AG04450 (cell line): ENCODE measurements at regions of chr12 and their contacts with region 1.

Region 1: DNA sequence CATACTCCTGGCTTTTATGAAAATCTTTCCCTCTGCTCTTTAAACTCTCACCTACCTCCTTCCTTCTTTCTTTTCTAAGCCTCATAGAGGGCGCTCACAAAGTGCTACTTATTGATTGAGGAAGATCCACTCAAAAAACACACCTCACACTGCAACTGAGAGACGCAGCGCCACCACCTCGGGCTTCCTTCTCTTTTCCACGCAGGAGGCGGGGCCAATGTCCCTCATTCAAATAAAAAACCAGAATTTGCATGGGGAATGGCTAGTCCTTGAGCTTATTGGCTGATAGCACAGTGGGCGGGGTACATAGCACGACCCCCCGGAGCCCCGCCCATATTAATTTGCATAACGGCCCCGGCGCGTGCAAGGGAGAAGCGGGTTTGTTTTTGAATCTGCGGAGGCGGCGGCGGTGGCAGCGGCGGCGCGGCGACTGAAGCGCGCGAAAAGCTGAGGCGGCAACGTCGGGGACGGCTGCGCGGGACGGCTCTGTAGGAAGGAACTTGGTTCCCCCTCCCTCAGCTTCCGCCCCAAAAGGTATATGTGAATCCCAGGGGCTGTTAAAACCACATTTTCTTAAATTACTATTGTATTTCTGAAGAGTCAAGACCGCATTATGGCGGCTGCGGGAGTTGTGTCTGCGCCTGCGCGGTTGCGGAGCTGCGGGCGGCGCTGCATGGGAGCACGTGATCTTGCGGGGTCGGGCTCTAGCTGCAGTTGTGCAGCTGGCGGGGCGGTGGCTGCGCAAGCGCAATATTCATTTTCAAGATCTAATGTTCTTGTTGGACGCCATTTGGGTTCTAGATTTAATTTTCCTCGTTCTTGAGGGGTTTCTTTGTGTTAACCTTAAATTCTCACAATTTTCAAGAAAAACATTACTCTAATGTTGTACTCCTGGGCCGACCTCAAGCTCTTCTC is at the start of gene ATF7IP:
- DNase-seq: peak; percentile 94
- H3K4me3 ChIP-seq: peak within 1 kb of the TSS; percentile 77
- H3K27ac ChIP-seq: peak within 1 kb of the TSS; percentile 90
- H3K27me3 ChIP-seq: no peaks in the 10 kb centered on the region
- CTCF ChIP-seq: peak; percentile 30; the same call in 1 of the 2 replicates
- polyA plus RNA-seq, gene ATF7IP: 24.8 and 26.6 TPM in 2 replicates

Region 2: DNA sequence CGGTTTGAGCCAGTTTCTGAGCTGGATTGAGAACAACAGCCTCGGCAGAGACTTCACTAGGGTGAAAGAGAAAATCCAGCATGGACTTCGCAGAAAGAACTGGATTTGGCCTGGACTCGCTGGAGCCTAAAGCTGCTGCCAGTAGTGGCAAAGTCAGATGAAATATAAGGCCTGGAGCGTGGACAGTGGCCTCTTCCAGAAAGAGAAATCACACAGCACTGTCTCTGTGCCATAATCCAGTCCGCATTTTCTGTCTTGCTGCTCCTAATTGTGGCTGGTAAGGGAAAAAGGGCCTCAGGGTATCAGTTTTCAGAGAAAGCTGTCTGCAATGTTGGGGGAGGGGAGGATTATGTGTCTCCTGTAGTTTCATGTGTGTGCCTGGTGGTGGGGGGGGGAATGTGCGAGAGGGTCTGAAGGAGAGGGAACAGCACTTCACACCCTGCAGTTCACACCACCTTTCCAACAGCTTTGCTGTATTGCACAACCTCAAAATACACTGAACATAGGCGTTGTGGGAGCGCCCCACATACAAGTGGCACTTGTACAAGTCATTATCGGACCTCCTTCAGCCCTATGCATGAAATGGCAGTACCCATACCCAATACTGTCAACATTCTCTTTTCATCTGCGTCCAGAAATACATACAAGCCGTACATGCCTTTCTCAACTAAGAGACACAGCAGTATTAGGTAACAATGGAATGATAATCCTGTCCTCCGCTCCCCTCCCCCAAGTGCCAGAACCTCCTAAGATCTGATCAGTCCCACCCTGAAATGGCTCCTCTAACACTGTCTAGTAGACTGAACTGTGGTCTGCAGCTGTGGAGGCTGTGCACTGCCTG is 107.6 kb before region 1 on chr12:
- CTCF ChIA-PET with region 1: interaction called, 18 read pairs
- POLR2A ChIA-PET with region 1: interaction called, 28 read pairs
- DNase-seq: peak; percentile 99
- H3K4me3 ChIP-seq: 0 out of 2 replicates have a peak overlapping the region, but pooled peaks have one; percentile 32
- H3K27ac ChIP-seq: peak overlapping the region; percentile 74
- H3K27me3 ChIP-seq: no peaks in the 10 kb centered on the region
- CTCF ChIP-seq: no peak

Region 3: GRCh38 chr12:14384783-14385638 is 19.5 kb after region 1 on chr12:
- CTCF ChIA-PET with region 1: interaction called, 4 read pairs
- POLR2A ChIA-PET with region 1: interaction called, 14 read pairs
- DNase-seq: peak; percentile 87
- H3K4me3 ChIP-seq: peak overlapping the region; percentile 54
- H3K27ac ChIP-seq: peak overlapping the region; percentile 32
- H3K27me3 ChIP-seq: no peaks in the 10 kb centered on the region
- CTCF ChIP-seq: no peak

Region 4: GRCh38 chr12:14417715-14418114 is 52.2 kb after region 1 on chr12:
- CTCF ChIA-PET with region 1: interaction called, 10 read pairs
- POLR2A ChIA-PET with region 1: interaction called, 9 read pairs
- DNase-seq: peak; percentile 76
- H3K4me3 ChIP-seq: no peak overlapping the region
- H3K27ac ChIP-seq: no peak overlapping the region
- H3K27me3 ChIP-seq: no peaks in the 10 kb centered on the region
- CTCF ChIP-seq: no peak